ENCODE measurements at regions of chr19 and their contacts with region 1.

Region 1: DNA sequence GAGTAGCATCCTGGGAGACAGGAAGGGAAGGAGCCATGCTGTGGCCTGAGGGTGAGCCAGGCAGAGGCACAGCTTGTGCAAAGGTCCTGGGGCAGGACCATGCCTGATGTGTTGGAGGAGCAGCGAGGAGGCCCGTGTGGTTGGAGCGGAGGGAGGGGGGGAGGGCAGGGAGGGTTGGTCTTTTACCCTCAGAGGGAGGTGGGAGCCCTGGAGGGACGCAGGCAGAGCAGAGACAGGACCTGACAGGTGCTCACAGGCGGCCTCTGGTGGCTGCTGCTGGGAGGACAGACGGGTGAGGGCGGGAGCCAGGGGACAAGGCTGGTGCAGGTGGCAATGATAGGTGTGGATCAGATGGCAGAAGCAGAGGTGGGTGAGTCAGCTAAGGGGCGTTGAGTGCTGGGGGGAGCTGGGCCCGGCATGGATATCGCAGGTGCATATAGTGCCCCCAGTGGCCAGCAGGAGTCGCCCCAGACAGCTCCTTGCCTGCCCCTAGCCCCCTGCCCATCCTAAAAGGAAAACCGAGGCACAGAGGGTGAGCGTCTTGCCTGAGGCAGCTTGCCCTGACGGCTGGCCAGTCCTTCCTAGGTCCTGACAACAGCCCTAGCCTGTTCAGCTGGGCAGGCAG is 9.8 kb upstream of the GNA15 start:
- DNase-seq: peak; percentile 85 to 87
- H3K4me3 ChIP-seq: no peak overlapping the region
- H3K27ac ChIP-seq: no peak overlapping the region
- H3K4me1 ChIP-seq: no peaks in the 10 kb centered on the region
- H3K27me3 ChIP-seq: no peaks in the 10 kb centered on the region
- CTCF ChIP-seq: peak; percentile 61 to 96 (median 73)
- EP300 ChIP-seq: no peak
- POLR2A ChIP-seq: no peak
- RAD21 ChIP-seq: peak; percentile 52 to 55

Region 2: DNA sequence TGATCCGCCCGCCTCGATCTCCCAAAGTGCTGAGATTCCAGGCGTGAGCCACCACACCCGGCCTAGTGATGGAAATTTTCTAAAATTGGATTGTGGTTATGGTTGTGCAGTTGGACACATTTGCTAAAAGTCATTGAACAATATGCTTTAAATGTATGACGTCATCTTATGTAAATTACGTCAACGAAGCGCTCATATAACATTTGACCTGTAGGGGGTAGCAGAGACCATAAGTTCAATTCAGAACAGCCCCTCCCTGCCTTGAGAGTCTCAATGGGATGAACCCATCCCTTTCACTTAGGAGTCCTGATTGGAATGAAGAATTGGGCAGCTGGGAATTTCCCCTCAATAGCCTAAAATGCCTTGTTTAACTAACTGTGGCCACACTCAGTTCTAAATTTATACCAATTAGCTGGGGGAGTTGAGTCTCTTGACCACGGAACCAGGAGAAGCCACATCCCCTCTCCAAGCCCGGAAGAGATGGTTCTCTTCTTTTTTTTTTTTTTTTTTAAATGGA is 163.9 kb before region 1 on chr19:
- CTCF ChIA-PET with region 1: interaction called, 15 read pairs
- POLR2A ChIA-PET with region 1: no interaction called
- DNase-seq: peak in 1 of 2 experiments; percentile 69
- H3K4me3 ChIP-seq: no peak overlapping the region
- H3K27ac ChIP-seq: no peak overlapping the region
- H3K4me1 ChIP-seq: no peaks in the 10 kb centered on the region
- H3K27me3 ChIP-seq: no peaks in the 10 kb centered on the region; a peak in 1 of 7 replicates
- CTCF ChIP-seq: peak in 2 of 3 experiments; percentile 82 to 83; a peak in 3 of 4 replicates
- EP300 ChIP-seq: no peak
- POLR2A ChIP-seq: no peak
- RAD21 ChIP-seq: peak; percentile 97 to 98

Region 3: DNA sequence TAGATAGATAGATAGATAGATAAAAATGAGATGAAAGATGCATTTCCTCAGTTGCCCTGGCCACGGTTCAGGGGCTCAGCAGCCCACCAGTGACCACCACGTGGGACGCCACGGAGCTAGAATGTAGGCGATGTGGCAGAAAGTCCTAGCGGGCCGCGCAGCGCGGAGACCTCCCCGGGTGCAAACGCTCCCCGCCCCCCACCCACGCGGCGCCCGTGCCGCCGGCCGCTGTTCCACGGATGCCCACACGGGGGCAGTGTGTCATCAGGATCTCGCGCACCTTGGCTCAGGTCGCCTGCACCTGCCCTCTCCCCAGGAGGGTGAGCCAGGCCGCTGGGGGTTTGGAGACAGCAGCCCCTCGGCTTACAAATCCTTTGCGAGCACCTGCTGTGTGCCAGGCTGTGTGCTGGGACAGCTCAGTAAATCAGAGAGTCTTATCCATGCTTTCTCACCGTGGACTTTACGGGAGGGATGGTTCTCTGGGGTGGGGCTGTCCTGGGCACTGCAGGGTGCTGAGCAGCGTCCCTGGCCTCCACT is 50.0 kb before region 1 on chr19:
- CTCF ChIA-PET with region 1: interaction called, 22 read pairs
- POLR2A ChIA-PET with region 1: interaction called, 3 read pairs
- DNase-seq: peak in 1 of 2 experiments; percentile 91
- H3K4me3 ChIP-seq: peak overlapping the region in 3 of 4 experiments; percentile 15 to 48 (median 18); a peak in 4 of 8 replicates
- H3K27ac ChIP-seq: no peak overlapping the region
- H3K4me1 ChIP-seq: peaks cover 0 to 4% (median 0%) of the 10 kb centered on the region in 4 experiments; a peak in 1 of 7 replicates
- H3K27me3 ChIP-seq: peaks cover 0 to 4% (median 1%) of the 10 kb centered on the region in 4 experiments; a peak in 1 of 7 replicates
- CTCF ChIP-seq: peak; percentile 88 to 95 (median 92)
- EP300 ChIP-seq: peak in 1 of 2 experiments; percentile 13; a peak in 1 of 3 replicates
- POLR2A ChIP-seq: no peak
- RAD21 ChIP-seq: peak; percentile 91 to 94

Region 4: DNA sequence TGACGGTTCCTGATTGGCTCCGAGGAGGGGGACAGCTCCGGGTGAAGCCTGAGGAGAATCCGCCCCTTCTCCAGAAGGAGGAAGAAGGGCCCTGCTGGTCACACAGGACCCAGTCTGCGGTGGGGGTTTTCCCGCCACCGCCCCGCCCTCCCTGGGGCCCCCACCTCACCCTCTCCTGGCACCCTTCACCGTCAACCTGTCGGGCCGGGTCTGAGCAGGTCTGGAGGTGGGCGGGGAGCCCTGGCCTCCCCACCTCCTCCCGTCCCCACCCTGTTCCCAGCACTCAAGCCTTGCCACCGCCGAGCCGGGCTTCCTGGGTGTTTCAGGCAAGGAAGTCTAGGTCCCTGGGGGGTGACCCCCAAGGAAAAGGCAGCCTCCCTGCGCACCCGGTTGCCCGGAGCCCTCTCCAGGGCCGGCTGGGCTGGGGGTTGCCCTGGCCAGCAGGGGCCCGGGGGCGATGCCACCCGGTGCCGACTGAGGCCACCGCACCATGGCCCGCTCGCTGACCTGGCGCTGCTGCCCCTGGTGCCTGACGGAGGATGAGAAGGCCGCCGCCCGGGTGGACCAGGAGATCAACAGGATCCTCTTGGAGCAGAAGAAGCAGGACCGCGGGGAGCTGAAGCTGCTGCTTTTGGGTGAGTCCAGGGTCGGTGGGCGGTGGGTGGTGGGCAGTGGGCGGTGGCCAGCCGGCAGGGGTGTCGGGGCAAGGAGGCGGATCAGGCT is 10.1 kb after region 1 on chr19 and contains the start of gene GNA15:
- CTCF ChIA-PET with region 1: interaction called, 166 read pairs
- POLR2A ChIA-PET with region 1: interaction called, 3 read pairs
- DNase-seq: no peak
- H3K4me3 ChIP-seq: no peak within 1 kb of the TSS
- H3K27ac ChIP-seq: no peak within 1 kb of the TSS
- H3K4me1 ChIP-seq: peaks cover 0 to 4% (median 0%) of the 10 kb centered on the region in 4 experiments; a peak in 1 of 7 replicates
- H3K27me3 ChIP-seq: no peaks in the 10 kb centered on the region
- CTCF ChIP-seq: no peak
- EP300 ChIP-seq: no peak
- POLR2A ChIP-seq: no peak
- RAD21 ChIP-seq: no peak
- total RNA-seq, gene GNA15: 0.25 and 0.26 TPM in 2 replicates

Region 5: GRCh38 chr19:3163230-3163886 is 37.3 kb after region 1 on chr19:
- CTCF ChIA-PET with region 1: interaction called, 162 read pairs
- POLR2A ChIA-PET with region 1: interaction called, 4 read pairs
- DNase-seq: peak; percentile 53 to 85
- H3K4me3 ChIP-seq: peak overlapping the region in 3 of 4 experiments; percentile 36 to 54 (median 53); a peak in 6 of 8 replicates
- H3K27ac ChIP-seq: no peak overlapping the region
- H3K4me1 ChIP-seq: peaks cover 0 to 3% (median under 1%) of the 10 kb centered on the region in 4 experiments; a peak in 2 of 7 replicates
- H3K27me3 ChIP-seq: peaks cover 0 to 5% (median 2%) of the 10 kb centered on the region in 4 experiments; a peak in 3 of 7 replicates
- CTCF ChIP-seq: peak; percentile 94 to 97 (median 97)
- EP300 ChIP-seq: no peak
- POLR2A ChIP-seq: no peak
- RAD21 ChIP-seq: peak; percentile 95 to 97

Region 6: DNA sequence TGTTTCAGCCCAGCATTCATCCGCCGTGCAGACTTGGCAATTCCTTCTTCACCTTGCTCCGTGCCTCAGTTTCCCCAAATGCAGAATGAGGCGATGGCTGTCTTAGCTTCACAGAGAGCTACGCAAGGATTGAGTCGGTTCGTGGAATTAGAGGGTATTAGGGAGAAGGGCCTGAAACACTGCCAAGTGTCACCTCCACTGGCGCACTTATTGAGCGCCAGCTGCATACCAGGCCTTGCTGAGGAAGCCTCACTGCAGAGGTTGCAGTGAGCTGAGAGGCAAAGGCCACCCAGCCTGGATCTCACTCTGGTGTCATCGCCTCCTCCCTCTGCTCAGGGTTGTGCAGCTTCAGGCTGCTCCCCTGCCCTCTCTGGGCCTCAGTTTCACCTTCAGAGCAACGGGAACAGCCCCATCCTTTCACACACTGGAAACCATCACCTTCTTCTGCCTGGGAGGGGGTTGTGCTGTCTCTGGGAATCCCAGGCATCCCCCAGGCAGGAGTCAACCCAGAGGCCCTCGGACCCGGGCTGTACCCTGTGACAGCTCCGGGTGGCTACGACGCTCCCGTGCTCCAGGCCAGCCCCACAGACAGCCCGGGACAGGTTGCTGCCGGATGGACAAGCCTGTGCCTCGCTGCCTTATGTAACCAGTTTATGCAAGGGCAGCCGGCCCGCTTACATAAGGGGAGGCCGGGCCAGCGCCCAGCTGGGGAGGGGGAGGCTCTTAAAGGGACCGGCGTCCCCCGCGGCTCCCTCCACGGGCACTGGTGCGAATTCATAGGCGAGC is 272.3 kb after region 1 on chr19:
- CTCF ChIA-PET with region 1: no interaction called
- POLR2A ChIA-PET with region 1: no interaction called
- DNase-seq: no peak
- H3K4me3 ChIP-seq: no peak overlapping the region
- H3K27ac ChIP-seq: no peak overlapping the region
- H3K4me1 ChIP-seq: peaks cover 0 to 14% (median 5%) of the 10 kb centered on the region in 4 experiments; a peak in 4 of 7 replicates
- H3K27me3 ChIP-seq: peaks cover 0 to 5% (median 2%) of the 10 kb centered on the region in 4 experiments; a peak in 3 of 7 replicates
- CTCF ChIP-seq: no peak
- EP300 ChIP-seq: no peak
- POLR2A ChIP-seq: no peak
- RAD21 ChIP-seq: no peak

Measured in H1 (cell line).